ENCODE measurements at regions of chr3 and their contacts with region 1.

Region 1: DNA sequence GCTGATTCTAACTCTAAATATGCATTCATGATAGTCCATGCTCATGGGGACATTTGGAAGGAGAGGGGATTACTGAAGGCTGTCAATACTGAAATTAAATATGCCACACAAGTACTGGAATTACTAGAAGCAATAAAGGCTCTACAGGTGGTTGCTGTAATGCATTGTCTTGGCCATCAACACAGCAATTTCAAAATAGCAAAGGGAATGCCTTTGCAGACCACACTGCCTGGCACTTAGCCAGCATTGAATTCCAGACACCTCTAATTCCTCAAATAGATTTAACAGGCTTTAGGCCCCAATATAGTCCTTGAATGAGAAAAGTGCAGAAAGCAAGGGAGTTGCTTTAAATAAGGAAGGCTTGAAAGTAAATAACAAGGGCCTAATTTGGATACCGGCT is 115.8 kb upstream of the PLCL2 start:
- DNase-seq: peak in 1 of 5 donors; percentile 39
- ATAC-seq: peak in 2 of 4 donors; percentile 10
- H3K4me3 ChIP-seq: no peak overlapping the region
- H3K27ac ChIP-seq: peak overlapping the region in 11 of 12 donors; percentile 11 to 90 (median 76)
- H3K4me1 ChIP-seq: peaks cover 0 to 38% (median 19%) of the 10 kb centered on the region in 12 donors
- H3K27me3 ChIP-seq: no peaks in the 10 kb centered on the region
- CTCF ChIP-seq: no peak
- POLR2A ChIP-seq: no peak

Region 2: GRCh38 chr3:16467393-16467792 is 301.6 kb before region 1 on chr3:
- intact Hi-C with region 1: no loop called
- DNase-seq: no peak
- ATAC-seq: no peak
- H3K4me3 ChIP-seq: no peak overlapping the region
- H3K27ac ChIP-seq: peak overlapping the region in 8 of 12 donors; percentile 5 to 70 (median 46)
- H3K4me1 ChIP-seq: peaks cover 0 to 62% (median 45%) of the 10 kb centered on the region in 12 donors
- H3K27me3 ChIP-seq: no peaks in the 10 kb centered on the region
- CTCF ChIP-seq: no peak
- POLR2A ChIP-seq: no peak

Region 3: DNA sequence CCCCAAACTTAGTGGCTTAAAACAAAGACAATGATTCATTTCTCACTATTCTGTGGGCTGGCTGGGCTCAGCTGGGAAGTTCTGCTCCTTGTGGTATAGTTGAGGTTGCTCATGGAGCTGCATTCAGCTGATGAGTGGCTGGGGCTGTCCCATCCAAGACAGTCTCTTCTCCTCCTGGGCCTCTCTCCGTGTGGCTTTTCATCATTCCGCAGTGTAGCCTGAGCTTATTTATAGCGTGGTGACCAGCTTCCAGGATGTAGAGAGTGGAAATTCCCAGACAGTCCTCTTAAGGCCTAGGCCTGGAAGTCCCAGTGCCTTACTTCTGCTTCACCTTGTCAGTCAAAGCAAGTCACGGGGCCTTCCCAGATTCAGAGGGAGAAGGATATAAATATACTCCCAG is 27.1 kb before region 1 on chr3:
- intact Hi-C with region 1: loop called in 1 of 10 experiments (anchors 2 kb)
- DNase-seq: peak in 4 of 5 donors; percentile 40 to 86 (median 59)
- ATAC-seq: peak; percentile 99 to 100 (median 100)
- H3K4me3 ChIP-seq: peak overlapping the region in 2 of 12 donors; percentile 10 to 20
- H3K27ac ChIP-seq: peak overlapping the region in 11 of 12 donors; percentile 41 to 87 (median 64)
- H3K4me1 ChIP-seq: peaks cover 0 to 16% (median 0%) of the 10 kb centered on the region in 12 donors
- H3K27me3 ChIP-seq: no peaks in the 10 kb centered on the region
- CTCF ChIP-seq: no peak
- POLR2A ChIP-seq: peak in 1 of 2 donors; percentile 54

Region 4: GRCh38 chr3:16871915-16872842 is 103.2 kb after region 1 on chr3:
- intact Hi-C with region 1: loop called in 2 of 10 experiments (anchors 5 to 10 kb)
- DNase-seq: no peak
- ATAC-seq: no peak
- H3K4me3 ChIP-seq: no peak overlapping the region
- H3K27ac ChIP-seq: no peak overlapping the region
- H3K4me1 ChIP-seq: peaks cover 0 to 21% (median 0%) of the 10 kb centered on the region in 12 donors
- H3K27me3 ChIP-seq: no peaks in the 10 kb centered on the region
- CTCF ChIP-seq: no peak
- POLR2A ChIP-seq: no peak

Region 5: DNA sequence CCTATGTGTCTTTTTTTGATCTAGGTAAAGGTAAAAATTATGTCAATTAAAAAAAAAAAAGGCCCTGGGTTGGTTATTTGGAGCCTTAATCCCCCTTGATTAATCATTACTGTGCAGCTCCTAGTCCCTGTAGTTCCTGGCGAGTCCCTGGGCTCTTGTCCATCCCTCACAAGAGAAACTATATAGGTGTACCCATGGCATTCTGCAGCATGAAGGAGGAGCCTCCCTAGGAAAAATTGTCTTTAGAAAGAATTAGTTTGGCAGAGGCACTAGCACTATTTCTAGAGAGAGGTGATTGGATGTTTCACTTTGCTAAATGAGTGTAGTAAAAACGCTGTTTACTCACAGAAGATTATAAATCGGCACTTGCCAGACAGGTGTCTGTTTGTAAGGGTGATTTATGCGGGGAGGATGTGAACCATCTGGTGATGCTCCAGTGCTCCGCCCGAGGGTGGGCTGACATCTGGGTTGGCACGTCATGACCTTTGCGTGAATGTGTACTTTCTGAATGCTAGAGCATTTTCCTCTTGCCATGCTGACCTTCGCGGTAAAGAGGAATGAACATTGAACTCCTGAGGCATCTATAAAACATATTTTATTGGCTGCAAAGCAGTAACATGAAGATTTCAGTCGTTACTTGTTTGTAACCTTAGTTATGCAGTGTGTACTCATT is 128.4 kb after region 1 on chr3:
- intact Hi-C with region 1: loop called in 1 of 10 experiments (anchors 5 kb)
- DNase-seq: peak in 1 of 5 donors; percentile 35
- ATAC-seq: peak in 1 of 4 donors; percentile 17
- H3K4me3 ChIP-seq: peak overlapping the region in 4 of 12 donors; percentile 5 to 29 (median 12)
- H3K27ac ChIP-seq: peak overlapping the region; percentile 26 to 79 (median 63)
- H3K4me1 ChIP-seq: peaks cover 0 to 59% (median 30%) of the 10 kb centered on the region in 12 donors
- H3K27me3 ChIP-seq: no peaks in the 10 kb centered on the region
- CTCF ChIP-seq: no peak
- POLR2A ChIP-seq: no peak

Region 6: GRCh38 chr3:17023006-17023664 is 254.2 kb after region 1 on chr3:
- intact Hi-C with region 1: loop called in 1 of 10 experiments (anchors 10 kb)
- DNase-seq: no peak
- ATAC-seq: peak in 3 of 4 donors; percentile 28 to 82 (median 67)
- H3K4me3 ChIP-seq: no peak overlapping the region
- H3K27ac ChIP-seq: peak overlapping the region in 1 of 12 donors; percentile 11
- H3K4me1 ChIP-seq: peaks cover 0 to 20% (median 6%) of the 10 kb centered on the region in 12 donors
- H3K27me3 ChIP-seq: no peaks in the 10 kb centered on the region
- CTCF ChIP-seq: no peak
- POLR2A ChIP-seq: no peak

Measured in heart left ventricle (tissue), 16 donors.